ENCODE measurements at regions of chr19 and their contacts with region 1.

Region 1: GRCh38 chr19:46821498-46822409 is 28.9 kb downstream of the AP2S1 start:
- DNase-seq: peak; percentile 81
- H3K4me3 Mint-ChIP-seq: peak overlapping the region; percentile 26
- H3K27ac Mint-ChIP-seq: peak overlapping the region; percentile 65
- H3K4me1 Mint-ChIP-seq: peaks cover 33% of the 10 kb centered on the region
- H3K27me3 Mint-ChIP-seq: no peaks in the 10 kb centered on the region

Region 2: GRCh38 chr19:46759817-46760333 is 61.9 kb before region 1 on chr19:
- CTCF ChIA-PET with region 1: interaction called, 5 read pairs
- POLR2A ChIA-PET with region 1: no interaction called
- intact Hi-C with region 1: loop called (anchors 5 kb)
- DNase-seq: no peak
- H3K4me3 Mint-ChIP-seq: no peak overlapping the region
- H3K27ac Mint-ChIP-seq: no peak overlapping the region
- H3K4me1 Mint-ChIP-seq: no peaks in the 10 kb centered on the region
- H3K27me3 Mint-ChIP-seq: no peaks in the 10 kb centered on the region